Testis (tissue), 5 donors: ENCODE measurements at regions of chr16 and their contacts with region 1.

Region 1: DNA sequence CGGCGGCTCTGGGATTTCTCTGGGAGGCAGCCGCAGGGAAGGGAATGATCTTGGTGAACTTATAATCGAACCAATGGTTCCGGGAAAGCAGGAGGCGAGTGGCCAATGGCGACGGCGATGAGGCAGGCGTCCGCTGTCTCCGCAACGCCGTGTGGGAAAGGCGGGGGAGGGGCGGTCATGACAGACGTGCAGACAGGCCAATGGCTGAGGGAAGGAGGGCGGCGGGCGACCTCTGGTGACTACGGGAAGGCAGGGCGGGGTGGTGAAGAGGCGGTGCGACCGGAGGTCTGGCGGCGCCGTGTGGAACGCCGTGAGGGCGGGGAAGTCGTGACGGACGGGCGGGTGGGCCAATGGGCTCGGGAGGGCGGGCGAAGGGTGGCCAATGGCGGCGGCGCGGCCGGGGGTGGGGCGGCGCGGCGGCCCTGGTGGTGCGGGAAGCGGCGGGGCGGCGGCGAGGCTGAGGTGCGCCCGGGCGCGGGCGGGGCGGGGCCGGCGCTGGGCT is at the start of gene RAB40C:
- DNase-seq: peak; percentile 99
- H3K4me3 ChIP-seq: peak within 1 kb of the TSS; percentile 84 to 86
- H3K27ac ChIP-seq: peak within 1 kb of the TSS; percentile 96 to 98
- H3K4me1 ChIP-seq: peaks cover 33% of the 10 kb centered on the region
- H3K27me3 ChIP-seq: no peaks in the 10 kb centered on the region
- CTCF ChIP-seq: no peak
- POLR2A ChIP-seq: no peak
- total RNA-seq, gene RAB40C: 47.9 to 51.2 TPM

Region 2: GRCh38 chr16:636206-637080 is 46.7 kb after region 1 on chr16 and contains the start of gene METTL26:
- intact Hi-C with region 1: loop called (anchors 10 kb)
- DNase-seq: peak; percentile 98
- H3K4me3 ChIP-seq: peak within 1 kb of the TSS; percentile 75 to 90
- H3K27ac ChIP-seq: peak within 1 kb of the TSS; percentile 91 to 97
- H3K4me1 ChIP-seq: peaks cover 20% of the 10 kb centered on the region
- H3K27me3 ChIP-seq: no peaks in the 10 kb centered on the region
- CTCF ChIP-seq: peak in 1 of 3 experiments; percentile 14
- POLR2A ChIP-seq: peak; percentile 40
- total RNA-seq, gene METTL26: 161 to 185 TPM

Region 3: DNA sequence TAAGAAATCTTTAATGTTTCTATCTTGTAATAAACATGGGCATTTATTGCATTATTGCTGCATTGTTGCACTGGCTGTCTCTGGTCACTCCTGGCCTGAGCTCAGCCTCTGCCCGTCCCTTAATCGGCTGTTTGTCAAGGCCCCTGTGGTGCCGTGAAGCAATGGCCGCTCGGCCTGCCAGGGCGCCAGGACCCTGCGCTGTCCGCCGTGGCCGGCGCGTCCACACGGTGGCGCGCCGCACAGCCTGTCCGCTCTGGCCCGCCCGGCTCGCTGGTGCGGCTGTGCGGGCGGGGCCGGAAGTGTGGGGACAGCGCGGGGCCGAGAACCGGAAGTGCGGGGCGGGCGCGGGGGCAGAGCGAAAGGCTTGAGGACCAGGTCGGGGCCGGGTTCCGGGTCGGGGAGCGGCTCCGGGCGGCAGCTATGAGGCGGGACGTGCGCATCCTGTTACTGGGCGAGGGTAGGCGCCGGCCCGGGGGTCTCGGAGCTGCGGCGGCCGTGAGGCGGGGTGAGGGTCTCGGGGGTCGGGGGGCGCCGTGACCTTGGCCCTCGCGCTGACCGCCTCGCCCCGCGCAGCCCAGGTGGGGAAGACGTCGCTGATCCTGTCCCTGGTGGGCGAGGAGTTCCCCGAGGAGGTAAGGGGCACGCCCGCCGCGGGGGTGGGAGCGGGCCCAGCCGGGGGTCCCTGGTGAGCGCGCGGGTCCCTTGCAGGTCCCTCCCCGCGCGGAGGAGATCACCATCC is 78.2 kb after region 1 on chr16 and contains the start of gene RHOT2:
- intact Hi-C with region 1: loop called (anchors 10 kb)
- DNase-seq: peak; percentile 95
- H3K4me3 ChIP-seq: peak within 1 kb of the TSS; percentile 85 to 98
- H3K27ac ChIP-seq: peak within 1 kb of the TSS; percentile 77 to 80
- H3K4me1 ChIP-seq: peaks cover 13% of the 10 kb centered on the region
- H3K27me3 ChIP-seq: no peaks in the 10 kb centered on the region
- CTCF ChIP-seq: peak; percentile 83 to 98 (median 93)
- POLR2A ChIP-seq: no peak
- total RNA-seq, gene RHOT2: 157 to 176 TPM